Dendritic cell treated with granulocyte-macrophage colony-stimulating factor and Interleukin-4, amounts not matched to agents 40 ng/mL and 50 ng/mL, for 4 days (primary cell): ENCODE measurements at regions of chr1 and their contacts with region 1.

Region 1: DNA sequence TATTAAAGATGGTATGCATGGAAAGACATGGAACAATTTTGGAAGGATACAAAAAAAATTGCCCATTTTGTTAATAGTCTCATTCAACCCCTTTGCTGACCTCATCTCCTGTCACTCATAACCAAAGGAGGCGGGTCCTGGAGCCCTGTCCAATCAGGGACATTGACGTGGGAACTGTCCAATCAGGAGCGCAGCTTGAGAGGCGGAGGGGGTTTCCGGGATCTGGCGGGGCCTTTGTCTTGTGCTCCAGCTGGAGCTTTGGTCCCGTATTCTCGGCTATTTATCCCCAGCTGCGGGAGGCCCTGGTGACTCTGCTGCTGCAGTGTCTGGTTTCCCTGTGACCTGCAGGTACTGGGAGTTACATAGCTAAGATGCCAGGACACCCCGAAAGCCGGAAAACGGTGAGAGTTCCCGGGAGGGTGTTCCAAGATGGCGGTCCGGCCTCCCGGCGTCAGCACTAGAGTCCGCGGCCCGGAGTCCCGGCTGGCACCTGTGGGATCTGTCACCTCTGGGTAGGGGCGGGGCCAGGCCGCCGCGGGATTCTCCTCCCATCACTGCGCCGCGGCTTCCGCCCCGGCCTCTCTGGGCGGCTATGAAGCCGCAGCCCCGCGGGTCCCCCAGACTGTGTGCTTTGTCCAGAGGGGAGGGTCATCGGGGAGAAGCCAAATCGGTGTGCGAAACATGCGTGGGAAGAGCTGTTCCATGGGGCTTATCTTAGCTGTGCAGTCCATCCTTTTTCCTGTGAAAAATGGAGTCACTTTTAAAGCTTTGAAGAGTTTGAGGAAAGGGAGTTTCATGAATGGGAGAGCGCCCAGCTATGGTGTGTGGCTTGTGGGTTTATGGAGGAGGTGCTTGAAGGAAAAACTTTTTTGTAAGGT is at the start of gene ZNF678:
- H3K4me3 Mint-ChIP-seq: peak within 1 kb of the TSS; percentile 91
- H3K27ac Mint-ChIP-seq: peak within 1 kb of the TSS; percentile 93
- H3K4me1 Mint-ChIP-seq: peaks cover 22% of the 10 kb centered on the region
- H3K27me3 Mint-ChIP-seq: peaks cover 37% of the 10 kb centered on the region

Region 2: DNA sequence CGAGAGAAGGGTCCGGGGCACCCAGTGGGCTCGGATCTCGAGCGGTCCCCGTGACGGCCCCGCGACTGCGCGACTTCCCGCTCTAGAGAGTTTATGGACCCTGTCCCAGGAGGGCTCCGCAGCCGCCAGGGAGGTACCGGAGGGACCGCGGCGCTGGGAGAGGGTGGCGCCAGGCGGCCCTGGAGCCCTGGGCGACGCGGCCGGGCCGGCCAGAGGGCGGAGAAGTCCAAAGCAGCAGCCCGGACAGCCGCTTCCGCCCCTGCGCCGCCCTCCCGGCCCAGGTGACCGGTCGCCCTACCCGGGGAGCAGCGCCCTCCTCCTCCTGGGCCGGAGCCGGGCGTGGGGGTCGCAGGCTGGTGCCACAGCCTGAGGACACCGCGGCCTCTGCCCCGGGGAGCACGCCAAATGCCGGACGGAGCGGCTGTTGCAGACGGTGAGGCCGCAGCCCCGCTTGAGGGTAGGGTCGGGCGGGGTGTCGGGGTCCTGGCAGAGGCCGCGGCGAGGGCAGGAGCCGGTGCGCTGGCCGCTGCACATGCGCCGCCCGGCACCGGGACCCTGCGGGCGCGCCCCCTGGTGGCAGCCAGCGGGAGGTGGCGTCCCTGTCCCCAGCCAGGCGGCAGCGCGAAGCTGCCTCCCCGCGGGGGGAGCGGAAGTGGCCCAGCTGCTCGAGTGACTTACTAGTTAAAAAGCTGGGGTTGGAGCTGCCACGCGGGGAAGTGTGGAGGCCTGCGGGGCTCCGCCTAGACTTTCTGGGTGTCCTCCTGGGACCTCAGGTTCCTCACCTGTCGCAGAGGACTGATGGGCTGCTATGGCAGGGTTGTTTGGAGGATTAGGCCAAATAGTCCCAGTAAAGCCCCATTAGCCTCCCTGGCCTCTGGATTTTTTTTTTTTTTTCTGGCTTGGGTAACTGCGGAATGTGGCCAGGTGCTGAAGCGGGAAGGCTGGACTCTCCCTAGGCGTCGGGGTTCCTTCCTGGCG is 21.1 kb before region 1 on chr1:
- intact Hi-C with region 1: loop called (anchors 1 kb)
- H3K4me3 Mint-ChIP-seq: peak overlapping the region; percentile 70
- H3K27ac Mint-ChIP-seq: no peak overlapping the region
- H3K4me1 Mint-ChIP-seq: peaks cover 5% of the 10 kb centered on the region
- H3K27me3 Mint-ChIP-seq: peaks cover 19% of the 10 kb centered on the region

Region 3: GRCh38 chr1:227734856-227735538 is 171.4 kb after region 1 on chr1 and contains the starts of genes JMJD4 and SNAP47:
- intact Hi-C with region 1: loop called (anchors 1 kb)
- H3K4me3 Mint-ChIP-seq: peak within 1 kb of the TSS; percentile 87
- H3K27ac Mint-ChIP-seq: peak within 1 kb of the TSS; percentile 80
- H3K4me1 Mint-ChIP-seq: peaks cover 36% of the 10 kb centered on the region
- H3K27me3 Mint-ChIP-seq: no peaks in the 10 kb centered on the region

Region 4: DNA sequence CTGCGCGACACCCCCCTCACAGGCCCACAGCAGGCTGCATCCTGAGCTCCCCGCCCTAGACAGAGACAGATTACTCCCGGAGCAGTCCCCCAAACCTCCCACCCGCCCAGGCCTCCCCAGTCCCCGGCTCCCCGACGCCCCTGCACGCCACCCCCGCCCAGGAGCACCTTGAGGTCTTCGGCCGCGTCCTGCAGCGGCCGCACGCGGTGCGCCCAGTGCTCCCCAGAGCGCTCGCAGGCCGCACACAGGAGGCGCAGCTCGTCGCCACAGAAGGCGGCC is 842.4 kb after region 1 on chr1:
- intact Hi-C with region 1: loop called (anchors 10 kb)
- H3K4me3 Mint-ChIP-seq: peak overlapping the region; percentile 96
- H3K27ac Mint-ChIP-seq: peak overlapping the region; percentile 92
- H3K4me1 Mint-ChIP-seq: peaks cover 70% of the 10 kb centered on the region
- H3K27me3 Mint-ChIP-seq: no peaks in the 10 kb centered on the region